ENCODE measurements at regions of chr2 and their contacts with region 1.

Region 1: GRCh38 chr2:39160982-39161381 is 40.1 kb upstream of the SOS1 start:
- DNase-seq: peak; percentile 28
- ATAC-seq: peak; percentile 46; the same call in 1 of the 2 replicates
- H3K4me3 ChIP-seq: no peak overlapping the region
- H3K27ac ChIP-seq: no peak overlapping the region
- H3K4me1 ChIP-seq: peaks cover 1% of the 10 kb centered on the region; the same call in 1 of the 2 replicates
- H3K27me3 ChIP-seq: no peaks in the 10 kb centered on the region
- CTCF ChIP-seq: no peak
- POLR2A ChIP-seq: no peak
- RAD21 ChIP-seq: no peak

Region 2: GRCh38 chr2:39174022-39174421 is 13.0 kb after region 1 on chr2:
- CTCF ChIA-PET with region 1: no interaction called
- POLR2A ChIA-PET with region 1: interaction called, 10 read pairs
- dilution Hi-C with region 1: no loop called
- in situ Hi-C with region 1: no loop called
- intact Hi-C with region 1: no loop called
- DNase-seq: no peak
- ATAC-seq: no peak
- H3K4me3 ChIP-seq: no peak overlapping the region
- H3K27ac ChIP-seq: no peak overlapping the region
- H3K4me1 ChIP-seq: no peaks in the 10 kb centered on the region
- H3K27me3 ChIP-seq: no peaks in the 10 kb centered on the region
- CTCF ChIP-seq: no peak
- POLR2A ChIP-seq: no peak
- RAD21 ChIP-seq: no peak

Region 3: DNA sequence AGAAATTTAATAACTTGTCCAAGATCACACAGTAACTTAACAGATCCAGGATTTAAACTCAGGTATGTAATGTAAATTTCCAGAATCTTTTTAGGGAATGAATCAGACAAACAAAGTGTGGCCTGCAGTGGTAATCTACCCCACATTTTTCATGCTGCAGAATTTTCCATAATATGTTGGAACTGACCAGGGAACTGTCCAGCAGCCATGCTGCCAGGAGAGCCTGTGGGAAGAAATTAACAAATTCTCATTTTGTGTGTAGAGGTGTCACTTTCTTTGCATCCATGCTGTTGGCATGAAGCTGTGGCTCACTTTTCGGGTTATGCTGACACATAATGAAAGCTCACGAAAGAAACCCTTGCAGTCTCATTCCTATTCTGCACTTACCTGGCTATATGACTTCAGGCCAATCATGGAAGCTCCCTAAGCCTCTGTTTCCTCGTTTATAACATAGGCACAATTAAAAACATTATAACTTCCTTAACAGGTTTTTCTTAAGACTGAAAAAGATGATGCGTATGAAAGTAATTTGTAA is 28.0 kb after region 1 on chr2:
- CTCF ChIA-PET with region 1: no interaction called
- POLR2A ChIA-PET with region 1: no interaction called
- dilution Hi-C with region 1: no loop called
- in situ Hi-C with region 1: no loop called
- intact Hi-C with region 1: loop called (anchors 2 kb)
- DNase-seq: no peak
- ATAC-seq: no peak
- H3K4me3 ChIP-seq: no peak overlapping the region
- H3K27ac ChIP-seq: no peak overlapping the region
- H3K4me1 ChIP-seq: no peaks in the 10 kb centered on the region
- H3K27me3 ChIP-seq: no peaks in the 10 kb centered on the region
- CTCF ChIP-seq: no peak
- POLR2A ChIP-seq: no peak
- RAD21 ChIP-seq: no peak